ENCODE measurements at regions of chr11 and their contacts with region 1.

Region 1: DNA sequence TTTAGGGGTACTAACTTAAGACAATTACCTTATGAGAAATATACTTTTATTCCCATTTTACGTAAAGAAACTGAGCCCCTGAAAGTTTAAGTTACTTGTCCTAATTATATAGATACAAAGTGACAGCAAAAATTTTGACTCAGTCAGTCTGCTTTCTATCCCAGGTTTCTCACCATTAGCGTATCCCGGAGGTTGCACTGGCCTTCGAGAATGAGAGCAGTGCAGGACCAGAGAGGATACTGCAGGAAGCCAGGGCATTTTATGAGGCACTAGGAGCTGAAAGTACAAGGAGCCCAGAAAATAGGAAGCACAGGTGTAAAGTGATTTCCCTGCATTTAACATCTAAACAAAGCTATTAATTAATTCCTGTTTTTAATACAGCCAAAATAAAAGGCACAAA is 55.4 kb downstream of the GRIA4 start:
- DNase-seq: no peak
- H3K4me3 ChIP-seq: no peak overlapping the region
- H3K27ac ChIP-seq: no peak overlapping the region
- H3K4me1 ChIP-seq: no peaks in the 10 kb centered on the region
- CTCF ChIP-seq: no peak

Region 2: DNA sequence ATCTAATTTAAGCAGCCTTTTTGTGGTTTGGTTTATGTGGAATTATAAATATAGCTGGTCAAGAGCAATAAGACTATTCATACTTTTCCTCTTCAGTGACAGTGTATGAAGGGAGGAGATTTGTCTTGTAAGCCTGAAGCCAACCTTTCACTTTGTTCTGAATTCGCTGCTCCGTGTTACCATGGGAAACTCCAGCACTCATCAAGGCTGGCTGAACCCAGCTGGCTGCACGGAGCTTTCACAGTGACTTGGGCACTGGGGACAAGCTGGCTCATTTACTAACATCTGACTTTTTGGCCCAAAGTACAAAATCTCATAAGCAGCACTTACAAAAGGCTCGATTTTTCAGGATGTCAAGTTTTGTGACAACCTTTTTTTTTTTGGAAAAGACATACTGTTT is 175.8 kb before region 1 on chr11:
- CTCF ChIA-PET with region 1: no interaction called
- POLR2A ChIA-PET with region 1: no interaction called
- intact Hi-C with region 1: no loop called
- DNase-seq: no peak
- H3K4me3 ChIP-seq: no peak overlapping the region
- H3K27ac ChIP-seq: no peak overlapping the region
- H3K4me1 ChIP-seq: no peaks in the 10 kb centered on the region
- CTCF ChIP-seq: no peak

Region 3: DNA sequence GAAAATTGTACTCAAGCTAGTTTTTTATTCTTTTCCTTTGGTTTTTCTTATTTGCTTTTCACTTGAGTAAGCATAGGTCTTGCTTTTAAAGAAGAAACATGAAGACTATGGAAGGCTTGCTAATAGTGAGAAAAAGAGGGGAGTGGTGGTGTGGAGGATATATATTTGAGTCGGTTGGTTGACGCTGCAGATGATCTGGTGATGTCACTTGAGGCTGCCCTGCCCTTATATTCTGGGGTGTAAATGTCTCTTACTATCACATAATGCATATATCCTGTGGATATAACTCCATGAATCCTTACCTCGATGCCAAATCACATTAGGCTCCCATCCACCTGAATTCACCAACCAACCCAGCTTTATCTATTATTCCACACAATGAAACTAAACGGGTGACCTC is 52.5 kb before region 1 on chr11:
- CTCF ChIA-PET with region 1: no interaction called
- POLR2A ChIA-PET with region 1: no interaction called
- intact Hi-C with region 1: no loop called
- DNase-seq: no peak
- H3K4me3 ChIP-seq: no peak overlapping the region
- H3K27ac ChIP-seq: no peak overlapping the region
- H3K4me1 ChIP-seq: no peaks in the 10 kb centered on the region
- CTCF ChIP-seq: no peak

Region 4: DNA sequence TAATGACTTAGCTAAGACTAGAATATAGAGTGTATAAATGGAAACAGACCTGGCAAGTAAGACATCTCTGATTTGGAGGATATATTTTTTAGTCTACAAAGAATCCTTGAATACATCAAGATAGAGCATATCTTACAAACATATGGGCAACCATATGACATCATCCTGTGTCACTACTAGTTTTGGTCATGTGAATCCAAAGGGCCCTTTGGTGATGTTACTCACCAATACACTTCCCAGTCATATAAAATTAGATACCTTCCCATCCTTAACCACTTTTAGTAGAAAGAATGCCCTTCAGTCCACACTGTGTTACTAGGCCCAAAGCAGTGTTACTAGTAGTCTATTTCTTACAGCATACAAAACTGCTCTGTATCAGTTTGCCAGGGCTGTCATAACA is 23.8 kb before region 1 on chr11:
- CTCF ChIA-PET with region 1: no interaction called
- POLR2A ChIA-PET with region 1: interaction called, 3 read pairs
- intact Hi-C with region 1: loop called (anchors 1 kb)
- DNase-seq: no peak
- H3K4me3 ChIP-seq: no peak overlapping the region
- H3K27ac ChIP-seq: no peak overlapping the region
- H3K4me1 ChIP-seq: no peaks in the 10 kb centered on the region
- CTCF ChIP-seq: no peak

Measured in OCI-LY7 (cell line).